Endothelial cell of umbilical vein (primary cell): ENCODE measurements at regions of chr1 and their contacts with region 1.

Region 1: GRCh38 chr1:56578963-56579875 is at the start of gene PLPP3:
- DNase-seq: peak; percentile 94
- H3K4me3 ChIP-seq: peak within 1 kb of the TSS; percentile 42 to 99 (median 66)
- H3K27ac ChIP-seq: peak within 1 kb of the TSS; percentile 75
- H3K4me1 ChIP-seq: peaks cover 36% of the 10 kb centered on the region
- H3K27me3 ChIP-seq: no peaks in the 10 kb centered on the region
- CTCF ChIP-seq: peak; percentile 34 to 37
- POLR2A ChIP-seq: peak; percentile 93
- total RNA-seq, gene PLPP3: 7.2 and 14.1 TPM in 2 replicates

Region 2: DNA sequence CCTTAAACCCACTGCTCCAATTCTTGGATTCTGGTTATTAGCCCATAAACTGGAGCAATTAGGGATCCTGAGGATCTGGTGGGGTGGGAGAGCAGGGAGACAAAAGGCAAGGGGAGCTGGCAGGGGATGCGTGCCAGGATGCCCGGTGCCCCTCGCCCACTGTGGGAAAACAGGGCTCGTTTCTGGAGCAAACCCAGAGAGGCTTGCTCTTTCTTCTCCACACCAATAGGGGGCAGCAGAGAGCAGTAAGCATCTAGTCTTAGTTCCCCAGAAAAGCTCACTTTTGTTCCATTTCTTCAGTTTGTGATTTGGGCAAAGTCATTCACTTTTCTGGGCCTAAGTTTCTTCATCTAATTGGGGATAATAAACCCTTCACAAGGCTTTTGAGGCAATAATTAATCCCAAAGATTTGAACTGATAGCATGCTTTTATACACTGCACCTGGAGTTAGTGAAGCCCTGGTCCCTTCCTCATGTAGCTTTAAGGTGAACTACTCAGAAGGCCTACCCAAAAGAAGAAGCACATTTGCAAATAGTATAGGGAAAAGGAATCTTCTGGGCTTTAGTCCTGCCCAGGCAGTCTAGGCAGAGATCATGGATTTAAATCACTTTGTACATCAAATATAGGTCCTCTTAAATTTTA is 1203.5 kb before region 1 on chr1:
- CTCF ChIA-PET with region 1: interaction called, 174 read pairs
- POLR2A ChIA-PET with region 1: no interaction called
- dilution Hi-C with region 1: no loop called
- intact Hi-C with region 1: no loop called
- DNase-seq: peak; percentile 41
- H3K4me3 ChIP-seq: no peak overlapping the region
- H3K27ac ChIP-seq: no peak overlapping the region
- H3K4me1 ChIP-seq: no peaks in the 10 kb centered on the region
- H3K27me3 ChIP-seq: no peaks in the 10 kb centered on the region
- CTCF ChIP-seq: peak; percentile 87 to 96
- POLR2A ChIP-seq: no peak

Region 3: DNA sequence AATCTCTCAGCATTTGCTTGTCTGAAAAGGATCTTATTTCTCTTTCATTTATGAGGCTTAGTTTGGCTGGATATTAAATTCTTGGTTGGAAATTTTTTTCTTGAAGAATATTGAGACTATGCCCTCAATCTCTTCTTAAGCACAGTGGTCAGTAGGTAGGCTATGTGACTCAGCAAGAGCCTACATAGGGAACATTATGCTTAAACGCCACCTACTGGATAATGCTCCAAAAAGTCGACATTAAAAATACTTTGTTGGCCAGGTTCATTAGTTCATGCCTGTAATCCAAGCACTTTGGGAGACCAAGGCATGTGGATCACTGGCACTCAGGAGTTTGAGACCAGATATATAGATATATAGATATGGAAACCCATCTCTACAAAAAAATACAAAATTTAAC is 686.1 kb before region 1 on chr1:
- CTCF ChIA-PET with region 1: interaction called, 3 read pairs
- POLR2A ChIA-PET with region 1: no interaction called
- dilution Hi-C with region 1: no loop called
- intact Hi-C with region 1: loop called (anchors 5 kb)
- DNase-seq: peak; percentile 56
- H3K4me3 ChIP-seq: no peak overlapping the region
- H3K27ac ChIP-seq: no peak overlapping the region
- H3K4me1 ChIP-seq: no peaks in the 10 kb centered on the region
- H3K27me3 ChIP-seq: no peaks in the 10 kb centered on the region
- CTCF ChIP-seq: peak; percentile 22 to 27
- POLR2A ChIP-seq: no peak

Region 4: DNA sequence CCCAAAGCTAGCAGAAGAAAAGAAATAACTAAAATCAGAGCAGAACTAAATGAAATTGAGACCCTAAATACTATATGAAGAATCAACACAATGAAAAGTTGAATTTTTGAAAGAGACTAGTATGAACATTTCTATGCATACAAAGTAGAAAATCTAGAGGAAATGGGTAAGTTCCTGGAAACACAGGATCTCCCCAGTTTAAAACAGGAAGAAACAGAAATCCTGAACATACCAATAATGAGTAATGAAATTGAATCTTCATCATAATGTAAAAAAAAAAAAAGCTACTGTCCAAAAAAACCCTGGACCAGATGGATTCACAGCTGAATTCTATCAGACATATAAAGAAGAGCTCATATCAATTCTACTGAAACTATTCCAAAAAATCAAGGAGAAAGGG is 233.4 kb before region 1 on chr1:
- CTCF ChIA-PET with region 1: interaction called, 3 read pairs
- POLR2A ChIA-PET with region 1: no interaction called
- dilution Hi-C with region 1: no loop called
- intact Hi-C with region 1: loop called (anchors 5 kb)
- DNase-seq: peak; percentile 58
- H3K4me3 ChIP-seq: no peak overlapping the region
- H3K27ac ChIP-seq: peak overlapping the region; percentile 23
- H3K4me1 ChIP-seq: peaks cover 3% of the 10 kb centered on the region
- H3K27me3 ChIP-seq: no peaks in the 10 kb centered on the region
- CTCF ChIP-seq: no peak
- POLR2A ChIP-seq: no peak

Region 5: DNA sequence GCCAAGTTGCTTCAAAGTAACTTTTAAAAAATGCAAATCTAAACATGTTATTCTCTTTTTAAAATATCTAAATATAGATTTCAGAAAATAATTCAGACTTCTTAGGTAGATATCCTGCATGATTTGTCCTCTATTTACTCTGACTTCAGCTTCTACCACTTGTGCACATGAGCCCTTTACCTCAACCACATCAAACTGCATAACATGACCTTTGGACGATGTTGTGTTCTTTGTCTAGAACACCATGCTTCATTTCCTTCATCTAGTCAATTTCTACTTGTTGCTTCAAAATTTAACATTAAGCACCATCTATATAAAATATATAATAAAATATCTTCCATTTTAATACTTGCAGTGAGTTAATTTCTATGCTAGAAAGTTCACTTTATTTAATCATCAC is 96.7 kb before region 1 on chr1:
- CTCF ChIA-PET with region 1: interaction called, 5 read pairs
- POLR2A ChIA-PET with region 1: no interaction called
- dilution Hi-C with region 1: no loop called
- intact Hi-C with region 1: loop called (anchors 2 kb)
- DNase-seq: no peak
- H3K4me3 ChIP-seq: no peak overlapping the region
- H3K27ac ChIP-seq: no peak overlapping the region
- H3K4me1 ChIP-seq: peaks cover 24% of the 10 kb centered on the region
- H3K27me3 ChIP-seq: no peaks in the 10 kb centered on the region
- CTCF ChIP-seq: no peak
- POLR2A ChIP-seq: no peak

Region 6: GRCh38 chr1:56522680-56523079 is 56.5 kb before region 1 on chr1:
- CTCF ChIA-PET with region 1: interaction called, 4 read pairs
- POLR2A ChIA-PET with region 1: no interaction called
- dilution Hi-C with region 1: no loop called
- intact Hi-C with region 1: loop called (anchors 2 kb)
- DNase-seq: peak; percentile 84
- H3K4me3 ChIP-seq: no peak overlapping the region
- H3K27ac ChIP-seq: no peak overlapping the region
- H3K4me1 ChIP-seq: peaks cover 11% of the 10 kb centered on the region
- H3K27me3 ChIP-seq: no peaks in the 10 kb centered on the region
- CTCF ChIP-seq: no peak
- POLR2A ChIP-seq: no peak